Activated B cell treated with CpG ODN at 0.5 μM for 24 hours (primary cell): ENCODE measurements at regions of chr4 and their contacts with region 1.

Region 1: DNA sequence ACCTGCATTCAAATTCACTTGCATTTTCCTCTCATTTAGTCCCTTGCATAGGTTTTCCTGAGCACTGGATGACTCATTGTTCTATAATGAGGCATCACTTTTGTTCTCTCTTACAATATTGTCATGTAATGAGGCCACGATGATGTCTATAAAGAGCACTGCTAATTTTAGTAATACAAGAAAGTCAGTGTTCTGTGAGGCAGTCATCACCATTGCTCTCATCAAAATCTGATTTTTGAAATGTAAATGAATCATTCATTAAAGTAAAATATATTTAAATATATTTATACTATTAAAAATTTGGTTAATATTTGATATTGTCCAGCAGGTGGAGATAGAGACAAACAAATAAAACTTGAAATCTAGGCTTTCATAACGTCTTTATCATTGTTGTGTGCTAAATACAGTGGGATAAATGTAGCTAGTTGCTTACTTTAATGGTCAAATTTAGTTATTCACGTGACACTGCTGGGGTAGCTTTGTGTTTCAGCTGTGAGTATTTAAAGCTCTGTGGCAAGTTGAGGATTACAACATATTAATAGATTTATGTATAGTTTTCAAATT is 15.4 kb downstream of the HMGB2 start:
- DNase-seq: no peak
- ATAC-seq: no peak
- H3K4me3 Mint-ChIP-seq: no peak overlapping the region
- H3K27ac Mint-ChIP-seq: no peak overlapping the region
- H3K4me1 Mint-ChIP-seq: no peaks in the 10 kb centered on the region
- H3K27me3 Mint-ChIP-seq: no peaks in the 10 kb centered on the region
- CTCF ChIP-seq: peak; percentile 48

Region 2: GRCh38 chr4:171785388-171785787 is 1533.3 kb before region 1 on chr4:
- CTCF ChIA-PET with region 1: no interaction called
- POLR2A ChIA-PET with region 1: no interaction called
- intact Hi-C with region 1: no loop called
- DNase-seq: no peak
- ATAC-seq: no peak
- H3K4me3 Mint-ChIP-seq: no peak overlapping the region
- H3K27ac Mint-ChIP-seq: no peak overlapping the region
- H3K4me1 Mint-ChIP-seq: peaks cover 3% of the 10 kb centered on the region
- H3K27me3 Mint-ChIP-seq: no peaks in the 10 kb centered on the region
- CTCF ChIP-seq: no peak

Region 3: GRCh38 chr4:172892300-172892699 is 426.4 kb before region 1 on chr4:
- CTCF ChIA-PET with region 1: no interaction called
- POLR2A ChIA-PET with region 1: no interaction called
- intact Hi-C with region 1: no loop called
- DNase-seq: no peak
- ATAC-seq: no peak
- H3K4me3 Mint-ChIP-seq: no peak overlapping the region
- H3K27ac Mint-ChIP-seq: no peak overlapping the region
- H3K4me1 Mint-ChIP-seq: no peaks in the 10 kb centered on the region
- H3K27me3 Mint-ChIP-seq: no peaks in the 10 kb centered on the region
- CTCF ChIP-seq: no peak

Region 4: GRCh38 chr4:173334085-173334772 is 15.5 kb after region 1 on chr4 and contains the start of gene HMGB2:
- CTCF ChIA-PET with region 1: interaction called, 9 read pairs
- POLR2A ChIA-PET with region 1: interaction called, 19 read pairs
- intact Hi-C with region 1: no loop called
- DNase-seq: peak; percentile 95
- ATAC-seq: peak; percentile 93
- H3K4me3 Mint-ChIP-seq: peak within 1 kb of the TSS; percentile 96
- H3K27ac Mint-ChIP-seq: peak within 1 kb of the TSS; percentile 98
- H3K4me1 Mint-ChIP-seq: peaks cover 25% of the 10 kb centered on the region
- H3K27me3 Mint-ChIP-seq: no peaks in the 10 kb centered on the region
- CTCF ChIP-seq: no peak
- total RNA-seq, gene HMGB2: 63.2 and 63.9 TPM in 2 replicates

Region 5: DNA sequence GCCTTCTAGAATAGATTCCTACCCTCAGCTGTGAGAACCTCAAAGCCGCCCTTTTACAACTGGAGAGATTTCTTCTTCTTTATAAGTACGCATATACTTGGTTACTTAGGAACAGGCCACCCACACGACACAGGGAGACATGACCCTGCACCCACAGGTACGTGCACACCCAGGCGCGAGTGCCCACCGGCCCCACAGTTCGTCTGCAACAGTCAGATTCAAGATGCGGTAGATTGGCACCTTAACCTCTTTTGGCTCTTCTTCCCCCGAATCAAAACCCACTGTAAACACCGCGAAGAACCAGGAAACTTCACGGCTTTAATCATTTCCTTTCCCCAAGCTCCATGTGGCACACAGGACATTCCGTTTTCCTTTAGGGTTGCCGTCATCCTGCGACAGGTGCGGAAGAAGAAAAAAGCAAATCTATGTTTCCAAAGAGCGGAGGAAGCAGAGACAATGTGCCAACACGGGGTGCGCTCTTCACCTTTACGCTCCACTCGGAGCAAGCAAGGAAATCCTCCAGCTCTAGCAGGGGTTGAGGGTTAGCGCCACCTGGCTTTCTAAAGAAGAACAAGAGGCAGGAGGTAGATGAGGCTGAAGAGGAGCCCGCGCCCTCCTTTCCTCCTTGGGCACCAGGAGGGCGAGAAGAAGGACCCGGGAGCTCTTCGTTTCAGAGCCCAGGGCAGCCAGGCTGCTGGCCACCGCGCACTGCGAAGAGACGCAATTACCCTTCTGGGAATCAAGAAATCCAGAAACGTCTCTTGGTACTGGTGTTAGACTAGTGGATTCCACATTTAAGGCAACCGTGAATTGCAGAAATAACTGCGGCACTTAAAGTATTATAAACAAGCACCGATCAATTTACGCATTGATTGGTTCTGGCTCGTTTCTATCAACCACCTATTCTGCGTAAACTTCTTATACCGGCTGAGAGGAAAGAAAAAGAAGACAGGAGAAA is 175.6 kb after region 1 on chr4:
- CTCF ChIA-PET with region 1: no interaction called
- POLR2A ChIA-PET with region 1: no interaction called
- intact Hi-C with region 1: loop called (anchors 1 kb)
- DNase-seq: no peak
- ATAC-seq: peak; percentile 86
- H3K4me3 Mint-ChIP-seq: peak overlapping the region; percentile 83
- H3K27ac Mint-ChIP-seq: peak overlapping the region; percentile 37
- H3K4me1 Mint-ChIP-seq: peaks cover 23% of the 10 kb centered on the region
- H3K27me3 Mint-ChIP-seq: peaks cover 15% of the 10 kb centered on the region
- CTCF ChIP-seq: no peak

Region 6: DNA sequence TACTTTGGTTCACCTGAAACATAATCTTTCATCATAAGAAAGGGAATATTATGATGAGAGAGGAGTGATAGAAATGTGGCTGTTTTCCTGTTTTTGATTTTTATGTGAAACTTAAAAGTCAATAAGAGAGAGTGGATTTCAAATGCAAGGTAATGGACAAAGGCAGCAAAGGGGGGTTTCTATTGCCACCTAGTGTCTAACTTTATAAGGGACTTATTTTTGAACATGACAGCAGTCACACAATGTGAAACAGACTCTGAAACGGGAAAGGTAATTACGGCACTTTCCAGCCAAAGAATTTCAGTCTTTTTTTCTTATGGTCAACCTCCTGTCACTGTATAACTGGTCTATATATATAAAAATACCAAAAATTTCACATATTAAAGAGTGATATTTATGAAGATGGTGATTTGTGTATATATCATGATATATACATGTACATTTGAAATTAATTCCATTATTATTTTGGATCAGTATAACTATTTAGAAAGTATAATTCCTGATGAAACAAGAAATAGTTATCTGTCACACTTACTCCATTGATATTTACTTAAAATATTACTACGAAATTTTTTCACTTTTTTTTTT is 837.6 kb after region 1 on chr4:
- CTCF ChIA-PET with region 1: no interaction called
- POLR2A ChIA-PET with region 1: no interaction called
- intact Hi-C with region 1: loop called (anchors 2 kb)
- DNase-seq: no peak
- ATAC-seq: no peak
- H3K4me3 Mint-ChIP-seq: no peak overlapping the region
- H3K27ac Mint-ChIP-seq: no peak overlapping the region
- H3K4me1 Mint-ChIP-seq: no peaks in the 10 kb centered on the region
- H3K27me3 Mint-ChIP-seq: peaks cover 11% of the 10 kb centered on the region
- CTCF ChIP-seq: no peak

Region 7: DNA sequence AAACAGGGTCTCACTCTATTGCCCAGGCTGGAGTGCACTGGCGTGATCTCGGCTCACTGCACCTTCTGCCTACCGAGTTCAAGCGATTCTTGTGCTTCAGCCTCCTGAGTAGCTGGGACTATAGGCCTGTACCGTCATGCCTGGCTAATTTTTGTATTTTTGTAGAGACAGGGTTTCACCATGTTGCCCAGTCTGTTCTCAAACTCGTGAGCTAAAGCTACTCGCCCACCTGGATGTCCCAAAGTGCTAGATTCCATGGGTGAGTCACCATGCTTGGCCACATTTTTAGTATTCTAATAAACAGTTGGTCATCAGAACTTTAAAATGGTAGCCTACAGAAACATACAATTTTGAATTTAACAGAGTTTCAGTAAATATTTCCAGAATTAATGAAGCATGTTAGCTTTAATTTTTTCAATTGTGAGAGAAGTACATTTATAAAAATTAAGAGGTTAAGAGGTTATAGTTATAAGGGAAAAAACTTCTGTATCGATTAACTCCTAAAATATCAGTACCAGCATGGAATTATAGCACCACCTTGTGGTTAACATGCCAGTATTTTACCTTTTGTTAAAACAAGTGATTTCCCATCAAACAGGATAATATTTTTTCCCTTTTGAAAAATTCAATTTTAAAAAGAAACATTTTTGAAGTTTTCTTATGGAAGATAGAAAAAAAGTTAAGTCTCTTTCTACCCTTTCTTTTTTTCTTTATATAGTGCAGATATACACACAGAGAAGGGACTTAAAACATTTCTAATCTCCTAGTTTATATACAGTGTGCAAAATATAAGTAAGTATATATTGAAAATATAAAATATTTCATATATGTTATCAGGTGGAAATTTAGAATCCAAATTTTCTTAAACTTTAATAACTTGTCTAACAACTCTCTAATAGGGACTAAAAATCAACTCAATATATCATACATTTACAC is 1000.4 kb after region 1 on chr4:
- CTCF ChIA-PET with region 1: no interaction called
- POLR2A ChIA-PET with region 1: no interaction called
- intact Hi-C with region 1: loop called (anchors 2 kb)
- DNase-seq: no peak
- ATAC-seq: no peak
- H3K4me3 Mint-ChIP-seq: no peak overlapping the region
- H3K27ac Mint-ChIP-seq: no peak overlapping the region
- H3K4me1 Mint-ChIP-seq: no peaks in the 10 kb centered on the region
- H3K27me3 Mint-ChIP-seq: no peaks in the 10 kb centered on the region
- CTCF ChIP-seq: no peak

Region 8: GRCh38 chr4:174613979-174614378 is 1295.2 kb after region 1 on chr4:
- CTCF ChIA-PET with region 1: no interaction called
- POLR2A ChIA-PET with region 1: no interaction called
- intact Hi-C with region 1: no loop called
- DNase-seq: no peak
- ATAC-seq: no peak
- H3K4me3 Mint-ChIP-seq: no peak overlapping the region
- H3K27ac Mint-ChIP-seq: no peak overlapping the region
- H3K4me1 Mint-ChIP-seq: no peaks in the 10 kb centered on the region
- H3K27me3 Mint-ChIP-seq: no peaks in the 10 kb centered on the region
- CTCF ChIP-seq: no peak